Endothelial cell of umbilical vein (primary cell): ENCODE measurements at regions of chr11 and their contacts with region 1.

Region 1: DNA sequence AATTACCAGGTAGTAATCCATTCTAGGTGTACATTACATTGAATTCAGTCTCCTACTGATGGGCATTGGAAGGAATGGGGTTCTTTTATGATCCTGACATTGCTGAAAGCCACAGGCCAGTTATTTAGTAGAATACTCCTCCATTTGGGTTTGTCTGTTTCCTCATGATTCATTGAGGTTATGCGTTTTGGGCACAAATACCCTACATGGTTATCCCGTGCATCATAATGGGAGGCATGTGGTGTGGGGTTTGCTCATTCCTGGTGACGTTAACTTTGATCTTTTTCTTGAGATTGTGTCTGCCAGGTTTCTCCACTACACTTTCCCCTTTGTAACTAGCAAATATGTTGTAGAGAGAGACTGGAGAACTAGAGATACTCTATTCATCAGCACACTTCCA is 5.5 kb downstream of the FOLR3 start:
- DNase-seq: no peak
- H3K4me3 ChIP-seq: no peak overlapping the region
- H3K27ac ChIP-seq: no peak overlapping the region
- H3K4me1 ChIP-seq: no peaks in the 10 kb centered on the region
- H3K27me3 ChIP-seq: peaks cover 7 to 10% of the 10 kb centered on the region in 2 experiments
- CTCF ChIP-seq: no peak
- POLR2A ChIP-seq: no peak

Region 2: DNA sequence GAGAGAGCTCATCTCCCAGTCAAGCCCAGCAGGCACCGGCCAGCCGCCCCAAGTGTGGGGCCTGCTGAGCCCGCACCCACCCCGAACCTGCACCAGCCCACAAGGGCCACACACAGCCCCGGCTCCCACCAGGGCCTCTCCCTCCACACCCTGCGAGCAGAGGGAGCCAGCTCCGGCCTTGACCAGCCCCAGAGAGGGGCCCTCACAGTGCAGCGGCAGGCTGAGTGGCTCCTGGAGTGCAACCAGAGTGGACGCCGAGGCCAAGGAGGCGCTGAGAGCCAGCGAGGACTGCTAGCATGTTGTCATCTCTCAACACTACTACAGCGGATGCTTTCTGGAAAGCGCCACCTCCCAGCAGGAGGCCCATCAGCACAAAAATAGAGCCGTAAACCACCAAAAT is 297.2 kb before region 1 on chr11:
- CTCF ChIA-PET with region 1: no interaction called
- POLR2A ChIA-PET with region 1: no interaction called
- dilution Hi-C with region 1: no loop called
- intact Hi-C with region 1: no loop called
- DNase-seq: no peak
- H3K4me3 ChIP-seq: no peak overlapping the region
- H3K27ac ChIP-seq: no peak overlapping the region
- H3K4me1 ChIP-seq: no peaks in the 10 kb centered on the region
- H3K27me3 ChIP-seq: peaks cover 0 to 2% of the 10 kb centered on the region in 2 experiments
- CTCF ChIP-seq: no peak
- POLR2A ChIP-seq: no peak

Region 3: GRCh38 chr11:72015511-72016171 is 125.4 kb before region 1 on chr11:
- CTCF ChIA-PET with region 1: interaction called, 12 read pairs
- POLR2A ChIA-PET with region 1: no interaction called
- dilution Hi-C with region 1: no loop called
- intact Hi-C with region 1: no loop called
- DNase-seq: no peak
- H3K4me3 ChIP-seq: no peak overlapping the region
- H3K27ac ChIP-seq: no peak overlapping the region
- H3K4me1 ChIP-seq: no peaks in the 10 kb centered on the region
- H3K27me3 ChIP-seq: no peaks in the 10 kb centered on the region
- CTCF ChIP-seq: peak; percentile 24 to 57
- POLR2A ChIP-seq: no peak

Region 4: GRCh38 chr11:72058416-72059034 is 82.5 kb before region 1 on chr11:
- CTCF ChIA-PET with region 1: no interaction called
- POLR2A ChIA-PET with region 1: no interaction called
- dilution Hi-C with region 1: no loop called
- intact Hi-C with region 1: no loop called
- DNase-seq: no peak
- H3K4me3 ChIP-seq: no peak overlapping the region
- H3K27ac ChIP-seq: no peak overlapping the region
- H3K4me1 ChIP-seq: no peaks in the 10 kb centered on the region
- H3K27me3 ChIP-seq: no peaks in the 10 kb centered on the region
- CTCF ChIP-seq: no peak
- POLR2A ChIP-seq: no peak

Region 5: GRCh38 chr11:72080256-72080974 is 60.7 kb before region 1 on chr11 and contains the starts of genes LRRC51 and NUMA1:
- CTCF ChIA-PET with region 1: interaction called, 4 read pairs
- POLR2A ChIA-PET with region 1: no interaction called
- dilution Hi-C with region 1: no loop called
- intact Hi-C with region 1: loop called (anchors 2 kb)
- DNase-seq: peak; percentile 100
- H3K4me3 ChIP-seq: peak within 1 kb of the TSS; percentile 64 to 82 (median 78)
- H3K27ac ChIP-seq: peak within 1 kb of the TSS; percentile 94
- H3K4me1 ChIP-seq: peaks cover 28% of the 10 kb centered on the region
- H3K27me3 ChIP-seq: no peaks in the 10 kb centered on the region
- CTCF ChIP-seq: no peak
- POLR2A ChIP-seq: no peak
- total RNA-seq, gene LRRC51: 3.8 and 6.1 TPM in 2 replicates
- total RNA-seq, gene NUMA1: 164 and 168 TPM in 2 replicates

Region 6: GRCh38 chr11:72112321-72113219 is 28.5 kb before region 1 on chr11 and contains the start of gene ANAPC15:
- CTCF ChIA-PET with region 1: interaction called, 13 read pairs
- POLR2A ChIA-PET with region 1: no interaction called
- dilution Hi-C with region 1: no loop called
- intact Hi-C with region 1: no loop called
- DNase-seq: peak; percentile 100
- H3K4me3 ChIP-seq: peak within 1 kb of the TSS; percentile 14 to 69 (median 53)
- H3K27ac ChIP-seq: peak within 1 kb of the TSS; percentile 90
- H3K4me1 ChIP-seq: peaks cover 14% of the 10 kb centered on the region
- H3K27me3 ChIP-seq: peaks cover 0 to 3% of the 10 kb centered on the region in 2 experiments
- CTCF ChIP-seq: no peak
- POLR2A ChIP-seq: peak; percentile 99
- total RNA-seq, gene ANAPC15: 67.0 and 72.4 TPM in 2 replicates

Region 7: DNA sequence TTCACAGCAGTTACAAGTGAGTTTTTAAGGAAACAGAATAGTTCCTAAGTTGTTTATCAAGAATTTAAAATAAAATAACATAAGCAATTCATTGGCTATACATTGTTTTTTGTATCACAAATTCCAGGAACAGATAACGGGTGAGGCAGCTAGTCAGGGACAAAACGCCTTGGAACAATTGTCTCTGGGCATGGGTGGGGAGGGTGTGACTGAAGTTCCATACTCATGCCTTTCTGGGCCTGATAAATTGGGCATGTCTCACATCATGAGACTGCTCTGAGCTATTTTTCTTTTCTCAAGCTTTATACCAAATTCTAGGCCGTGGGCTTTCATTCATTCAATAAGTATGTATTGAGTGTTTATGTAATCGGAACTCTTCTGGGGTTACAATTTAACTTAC is 16.1 kb after region 1 on chr11:
- CTCF ChIA-PET with region 1: interaction called, 18 read pairs
- POLR2A ChIA-PET with region 1: interaction called, 4 read pairs
- dilution Hi-C with region 1: no loop called
- intact Hi-C with region 1: no loop called
- DNase-seq: no peak
- H3K4me3 ChIP-seq: no peak overlapping the region
- H3K27ac ChIP-seq: no peak overlapping the region
- H3K4me1 ChIP-seq: no peaks in the 10 kb centered on the region
- H3K27me3 ChIP-seq: peaks cover 7 to 10% of the 10 kb centered on the region in 2 experiments
- CTCF ChIP-seq: no peak
- POLR2A ChIP-seq: no peak

Region 8: GRCh38 chr11:72413914-72414628 is 273.0 kb after region 1 on chr11:
- CTCF ChIA-PET with region 1: interaction called, 9 read pairs
- POLR2A ChIA-PET with region 1: no interaction called
- dilution Hi-C with region 1: no loop called
- intact Hi-C with region 1: loop called (anchors 10 kb)
- DNase-seq: peak; percentile 81
- H3K4me3 ChIP-seq: no peak overlapping the region
- H3K27ac ChIP-seq: no peak overlapping the region
- H3K4me1 ChIP-seq: no peaks in the 10 kb centered on the region
- H3K27me3 ChIP-seq: no peaks in the 10 kb centered on the region
- CTCF ChIP-seq: peak; percentile 90 to 92
- POLR2A ChIP-seq: no peak